Caco-2 (cell line): ENCODE measurements at regions of chr14 and their contacts with region 1.

Region 1: GRCh38 chr14:74573421-74574089 is 38.5 kb downstream of the LTBP2 start:
- DNase-seq: peak in 1 of 2 experiments; percentile 44
- H3K4me3 ChIP-seq: no peak overlapping the region
- H3K4me3 Mint-ChIP-seq: no peak overlapping the region
- H3K27ac Mint-ChIP-seq: no peak overlapping the region
- H3K4me1 ChIP-seq: peaks cover 4% of the 10 kb centered on the region; the same call in 1 of the 2 replicates
- H3K4me1 Mint-ChIP-seq: no peaks in the 10 kb centered on the region
- H3K27me3 ChIP-seq: no peaks in the 10 kb centered on the region
- H3K27me3 Mint-ChIP-seq: no peaks in the 10 kb centered on the region
- CTCF ChIP-seq: peak; percentile 35 to 69

Region 2: DNA sequence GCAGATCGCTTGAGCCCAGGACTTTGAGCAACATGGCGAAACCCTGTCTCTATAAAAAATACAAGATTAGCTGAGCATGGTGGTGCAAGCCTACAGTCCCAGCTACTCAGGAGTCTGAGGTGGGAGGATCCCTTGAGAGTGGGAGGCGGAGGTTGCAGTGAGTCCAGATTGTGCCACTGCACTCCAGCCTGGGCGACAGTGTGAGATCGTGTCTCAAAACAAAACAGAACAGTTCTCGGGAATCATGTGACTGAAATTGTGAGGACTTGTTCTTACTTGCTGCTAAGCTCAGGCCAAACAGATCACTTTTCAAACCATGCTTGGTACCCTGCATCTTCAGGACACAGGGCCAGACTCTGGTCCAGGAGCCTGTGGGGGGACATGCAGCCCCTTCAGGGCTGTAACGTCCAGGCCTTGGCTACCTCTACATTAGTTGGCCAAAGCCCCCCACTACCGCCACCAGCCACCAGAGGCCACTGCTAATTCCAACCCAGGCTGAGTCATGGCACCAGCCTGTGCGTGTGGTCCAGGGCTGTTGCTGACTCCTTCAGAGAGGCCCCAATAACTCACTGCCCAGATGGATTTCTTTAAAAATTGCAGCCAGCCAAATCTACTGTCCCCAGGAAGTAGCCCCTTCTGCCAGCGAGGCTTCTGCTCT is 114.1 kb before region 1 on chr14:
- CTCF ChIA-PET with region 1: no interaction called
- POLR2A ChIA-PET with region 1: no interaction called
- intact Hi-C with region 1: no loop called
- DNase-seq: peak in 1 of 2 experiments; percentile 61
- H3K4me3 ChIP-seq: no peak overlapping the region
- H3K4me3 Mint-ChIP-seq: no peak overlapping the region
- H3K27ac Mint-ChIP-seq: no peak overlapping the region
- H3K4me1 ChIP-seq: no peaks in the 10 kb centered on the region
- H3K4me1 Mint-ChIP-seq: no peaks in the 10 kb centered on the region
- H3K27me3 ChIP-seq: no peaks in the 10 kb centered on the region
- H3K27me3 Mint-ChIP-seq: no peaks in the 10 kb centered on the region
- CTCF ChIP-seq: peak; percentile 52 to 75

Region 3: GRCh38 chr14:74514471-74514941 is 59.0 kb before region 1 on chr14:
- CTCF ChIA-PET with region 1: no interaction called
- POLR2A ChIA-PET with region 1: no interaction called
- intact Hi-C with region 1: no loop called
- DNase-seq: no peak
- H3K4me3 ChIP-seq: no peak overlapping the region
- H3K4me3 Mint-ChIP-seq: no peak overlapping the region
- H3K27ac Mint-ChIP-seq: no peak overlapping the region
- H3K4me1 ChIP-seq: no peaks in the 10 kb centered on the region
- H3K4me1 Mint-ChIP-seq: no peaks in the 10 kb centered on the region
- H3K27me3 ChIP-seq: no peaks in the 10 kb centered on the region
- H3K27me3 Mint-ChIP-seq: peaks cover 9% of the 10 kb centered on the region
- CTCF ChIP-seq: no peak

Region 4: DNA sequence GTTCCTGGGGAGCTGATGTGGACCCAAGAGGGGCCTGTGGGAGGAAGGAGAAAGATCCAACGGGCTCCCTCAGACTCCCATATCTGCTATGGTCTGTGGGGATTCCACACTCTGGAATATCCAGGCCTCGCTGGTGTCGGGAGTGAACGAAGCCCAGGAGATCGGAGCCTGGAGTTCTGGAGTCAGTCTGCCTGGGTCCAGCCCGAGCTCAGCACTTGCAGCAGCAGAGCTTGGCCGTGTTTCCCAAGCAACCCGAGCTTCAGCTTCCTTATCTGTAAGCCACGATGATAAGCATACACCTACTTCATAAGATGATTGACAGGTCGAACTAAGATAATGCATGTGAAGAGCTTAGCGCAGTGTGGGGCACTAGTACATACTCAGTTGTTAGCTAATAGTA is 28.4 kb after region 1 on chr14:
- CTCF ChIA-PET with region 1: interaction called, 12 read pairs
- POLR2A ChIA-PET with region 1: no interaction called
- intact Hi-C with region 1: no loop called
- DNase-seq: peak; percentile 60 to 70
- H3K4me3 ChIP-seq: no peak overlapping the region
- H3K4me3 Mint-ChIP-seq: no peak overlapping the region
- H3K27ac Mint-ChIP-seq: no peak overlapping the region
- H3K4me1 ChIP-seq: peaks cover 13% of the 10 kb centered on the region
- H3K4me1 Mint-ChIP-seq: peaks cover 8% of the 10 kb centered on the region
- H3K27me3 ChIP-seq: no peaks in the 10 kb centered on the region
- H3K27me3 Mint-ChIP-seq: no peaks in the 10 kb centered on the region
- CTCF ChIP-seq: no peak

Region 5: GRCh38 chr14:74641601-74642391 is 68.2 kb after region 1 on chr14:
- CTCF ChIA-PET with region 1: no interaction called
- POLR2A ChIA-PET with region 1: no interaction called
- intact Hi-C with region 1: no loop called
- DNase-seq: no peak
- H3K4me3 ChIP-seq: no peak overlapping the region
- H3K4me3 Mint-ChIP-seq: no peak overlapping the region
- H3K27ac Mint-ChIP-seq: no peak overlapping the region
- H3K4me1 ChIP-seq: no peaks in the 10 kb centered on the region
- H3K4me1 Mint-ChIP-seq: no peaks in the 10 kb centered on the region
- H3K27me3 ChIP-seq: no peaks in the 10 kb centered on the region
- H3K27me3 Mint-ChIP-seq: no peaks in the 10 kb centered on the region
- CTCF ChIP-seq: no peak

Region 6: DNA sequence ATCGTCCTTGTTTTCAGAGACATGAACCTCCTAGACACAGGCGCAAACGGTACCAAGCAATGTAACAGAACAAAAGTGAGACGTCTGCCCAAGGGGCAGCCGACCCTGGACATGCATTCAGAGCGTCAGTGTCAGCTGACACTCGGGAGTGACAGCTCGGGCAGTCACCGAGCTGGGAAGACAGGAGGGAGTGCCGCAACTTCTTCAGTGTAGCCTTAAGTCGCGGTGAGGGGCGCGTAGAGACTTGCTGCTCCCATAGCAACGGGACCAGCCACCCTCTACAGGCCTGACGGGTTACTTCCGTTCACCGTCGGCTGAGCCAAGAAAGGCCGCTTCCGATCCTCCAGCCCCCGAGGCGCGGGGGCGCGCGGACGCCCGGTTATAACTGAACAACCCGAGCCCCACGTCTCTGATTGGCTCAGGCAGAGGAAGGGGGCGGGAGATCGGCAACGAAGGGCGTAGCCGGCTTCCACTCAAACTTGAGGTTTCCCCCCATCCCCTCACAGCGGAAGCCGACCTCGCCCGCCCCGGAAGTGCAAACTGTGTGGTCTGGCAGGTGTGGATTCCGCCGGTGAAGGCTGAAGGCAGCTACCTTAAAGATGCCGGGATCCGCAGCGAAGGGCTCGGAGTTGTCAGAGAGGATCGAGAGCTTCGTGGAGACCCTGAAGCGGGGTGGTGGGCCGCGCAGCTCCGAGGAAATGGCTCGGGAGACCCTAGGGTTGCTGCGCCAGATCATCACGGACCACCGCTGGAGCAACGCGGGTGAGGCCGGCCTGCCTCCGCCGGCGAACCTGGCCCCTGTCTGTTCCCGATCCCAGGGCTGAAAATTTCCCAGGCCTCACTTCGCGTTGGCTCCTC is 429.1 kb after region 1 on chr14 and contains the start of gene EIF2B2:
- CTCF ChIA-PET with region 1: no interaction called
- POLR2A ChIA-PET with region 1: no interaction called
- intact Hi-C with region 1: no loop called
- DNase-seq: peak; percentile 98
- H3K4me3 ChIP-seq: peak within 1 kb of the TSS; percentile 82
- H3K4me3 Mint-ChIP-seq: peak within 1 kb of the TSS; percentile 87
- H3K27ac Mint-ChIP-seq: peak within 1 kb of the TSS; percentile 86
- H3K4me1 ChIP-seq: peaks cover 6% of the 10 kb centered on the region; the same call in 1 of the 2 replicates
- H3K4me1 Mint-ChIP-seq: peaks cover 7% of the 10 kb centered on the region
- H3K27me3 ChIP-seq: no peaks in the 10 kb centered on the region
- H3K27me3 Mint-ChIP-seq: no peaks in the 10 kb centered on the region
- CTCF ChIP-seq: peak in 1 of 2 experiments; percentile 29
- total RNA-seq, gene EIF2B2: 48.8 and 54.4 TPM in 2 replicates